CD8-positive, alpha-beta T cell (primary cell): ENCODE measurements at regions of chr7 and their contacts with region 1.

Region 1: GRCh38 chr7:44633254-44634186 is 27.1 kb downstream of the OGDH start:
- DNase-seq: peak in 5 of 9 experiments; percentile 50 to 85 (median 77)
- ATAC-seq: peak; percentile 42
- H3K4me3 ChIP-seq: no peak overlapping the region
- H3K4me3 Mint-ChIP-seq: peak overlapping the region; percentile 22
- H3K27ac ChIP-seq: peak overlapping the region; percentile 35 to 74
- H3K27ac Mint-ChIP-seq: peak overlapping the region; percentile 99
- H3K4me1 ChIP-seq: peaks cover 75% of the 10 kb centered on the region
- H3K4me1 Mint-ChIP-seq: peaks cover 83% of the 10 kb centered on the region
- H3K27me3 ChIP-seq: no peaks in the 10 kb centered on the region
- H3K27me3 Mint-ChIP-seq: no peaks in the 10 kb centered on the region
- CTCF ChIP-seq: no peak

Region 2: GRCh38 chr7:44617225-44617890 is 16.2 kb before region 1 on chr7:
- CTCF ChIA-PET with region 1: no interaction called
- POLR2A ChIA-PET with region 1: interaction called, 6 read pairs
- intact Hi-C with region 1: loop called in 1 of 2 experiments (anchors 2 kb)
- DNase-seq: no peak
- ATAC-seq: peak; percentile 45
- H3K4me3 ChIP-seq: no peak overlapping the region
- H3K4me3 Mint-ChIP-seq: no peak overlapping the region
- H3K27ac ChIP-seq: peak overlapping the region in 1 of 2 experiments; percentile 12
- H3K27ac Mint-ChIP-seq: peak overlapping the region; percentile 55
- H3K4me1 ChIP-seq: peaks cover 27% of the 10 kb centered on the region
- H3K4me1 Mint-ChIP-seq: peaks cover 70% of the 10 kb centered on the region
- H3K27me3 ChIP-seq: no peaks in the 10 kb centered on the region
- H3K27me3 Mint-ChIP-seq: no peaks in the 10 kb centered on the region
- CTCF ChIP-seq: no peak

Region 3: GRCh38 chr7:44650772-44651171 is 17.3 kb after region 1 on chr7:
- CTCF ChIA-PET with region 1: no interaction called
- POLR2A ChIA-PET with region 1: no interaction called
- intact Hi-C with region 1: loop called in 1 of 2 experiments (anchors 2 kb)
- DNase-seq: no peak
- ATAC-seq: no peak
- H3K4me3 ChIP-seq: no peak overlapping the region
- H3K4me3 Mint-ChIP-seq: no peak overlapping the region
- H3K27ac ChIP-seq: no peak overlapping the region
- H3K27ac Mint-ChIP-seq: no peak overlapping the region
- H3K4me1 ChIP-seq: no peaks in the 10 kb centered on the region
- H3K4me1 Mint-ChIP-seq: no peaks in the 10 kb centered on the region
- H3K27me3 ChIP-seq: no peaks in the 10 kb centered on the region
- H3K27me3 Mint-ChIP-seq: no peaks in the 10 kb centered on the region
- CTCF ChIP-seq: no peak

Region 4: DNA sequence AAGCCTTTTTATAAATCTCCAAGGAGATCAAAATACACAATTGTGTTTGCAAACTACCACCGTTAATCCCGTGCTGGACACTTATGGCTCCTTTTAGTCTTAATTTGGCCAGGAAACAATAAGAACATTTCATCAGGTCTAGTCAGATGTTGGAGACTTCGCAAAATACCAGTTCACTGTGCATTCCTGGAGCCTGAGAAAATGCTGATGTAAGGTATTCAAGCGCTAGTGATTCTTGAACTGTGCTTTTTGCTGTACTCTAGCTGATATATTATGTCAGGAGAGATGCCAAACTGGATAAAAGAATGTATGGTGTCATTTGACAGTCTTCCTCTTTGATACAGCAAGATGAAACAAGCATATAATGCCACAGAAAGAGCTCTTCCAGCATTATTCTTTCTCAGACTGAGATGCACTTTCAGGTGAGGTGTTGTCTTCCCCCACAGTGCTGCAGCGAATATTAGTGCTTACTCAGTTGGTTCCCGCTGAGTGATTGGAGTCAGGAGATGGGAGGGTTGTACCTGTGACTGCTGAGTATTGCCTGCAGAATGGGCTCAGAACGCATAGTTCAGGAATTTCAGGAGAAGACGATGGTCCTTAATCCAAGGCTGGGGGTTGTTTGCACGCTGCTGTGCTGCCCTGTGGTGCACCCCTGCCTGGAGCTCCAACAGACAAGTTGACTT is 32.2 kb after region 1 on chr7:
- CTCF ChIA-PET with region 1: no interaction called
- POLR2A ChIA-PET with region 1: no interaction called
- intact Hi-C with region 1: loop called in 1 of 2 experiments (anchors 5 kb)
- DNase-seq: no peak
- ATAC-seq: no peak
- H3K4me3 ChIP-seq: no peak overlapping the region
- H3K4me3 Mint-ChIP-seq: no peak overlapping the region
- H3K27ac ChIP-seq: no peak overlapping the region
- H3K27ac Mint-ChIP-seq: no peak overlapping the region
- H3K4me1 ChIP-seq: no peaks in the 10 kb centered on the region
- H3K4me1 Mint-ChIP-seq: peaks cover 3% of the 10 kb centered on the region
- H3K27me3 ChIP-seq: no peaks in the 10 kb centered on the region
- H3K27me3 Mint-ChIP-seq: no peaks in the 10 kb centered on the region
- CTCF ChIP-seq: no peak